ENCODE measurements at regions of chr2 and their contacts with region 1.

Region 1: DNA sequence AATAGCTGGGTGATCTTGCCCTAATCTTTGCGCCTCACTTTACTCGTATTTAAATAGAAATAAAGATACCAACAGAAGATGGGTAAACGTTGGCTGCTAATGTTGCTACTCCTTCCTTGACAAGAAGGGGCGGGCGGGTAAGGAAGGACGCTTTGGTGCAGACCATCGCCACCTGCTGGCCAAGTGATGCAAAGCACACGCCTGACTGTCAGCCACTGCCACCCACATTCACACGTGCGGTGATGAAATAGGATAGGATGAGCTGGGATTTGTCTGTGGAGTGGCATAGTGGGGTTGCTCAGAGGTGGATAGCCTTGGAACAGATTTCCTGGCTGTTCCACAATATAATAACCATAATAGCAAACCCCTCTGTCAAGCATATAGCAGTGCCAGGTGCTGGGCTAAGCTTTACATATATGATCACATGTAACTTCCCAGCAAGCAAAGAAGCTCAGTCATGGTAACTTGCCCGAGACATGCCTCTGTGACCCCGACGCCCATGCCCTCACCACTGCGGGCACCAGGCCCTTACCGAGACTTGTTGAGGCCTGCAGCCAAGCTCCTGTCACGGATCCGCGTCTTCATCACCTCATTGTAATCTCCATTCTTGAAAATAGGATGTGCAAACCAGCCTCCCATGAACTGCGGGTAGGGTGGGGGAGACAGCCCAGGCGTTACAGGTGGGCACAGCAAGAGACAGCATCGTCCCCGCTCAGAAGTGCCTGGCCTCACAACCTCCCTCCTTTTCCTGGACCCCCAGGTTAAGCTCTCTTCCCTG is 39.3 kb downstream of the LCT start:
- DNase-seq: peak; percentile 41 to 90
- H3K4me3 ChIP-seq: no peak overlapping the region
- H3K27ac ChIP-seq: peak overlapping the region; percentile 42; the same call in 1 of the 2 replicates
- H3K4me1 ChIP-seq: no peaks in the 10 kb centered on the region; a peak in 1 of 7 replicates
- H3K27me3 ChIP-seq: no peaks in the 10 kb centered on the region
- CTCF ChIP-seq: peak; percentile 97 to 100 (median 99)
- EP300 ChIP-seq: no peak
- POLR2A ChIP-seq: no peak
- RAD21 ChIP-seq: peak; percentile 59 to 74

Region 2: DNA sequence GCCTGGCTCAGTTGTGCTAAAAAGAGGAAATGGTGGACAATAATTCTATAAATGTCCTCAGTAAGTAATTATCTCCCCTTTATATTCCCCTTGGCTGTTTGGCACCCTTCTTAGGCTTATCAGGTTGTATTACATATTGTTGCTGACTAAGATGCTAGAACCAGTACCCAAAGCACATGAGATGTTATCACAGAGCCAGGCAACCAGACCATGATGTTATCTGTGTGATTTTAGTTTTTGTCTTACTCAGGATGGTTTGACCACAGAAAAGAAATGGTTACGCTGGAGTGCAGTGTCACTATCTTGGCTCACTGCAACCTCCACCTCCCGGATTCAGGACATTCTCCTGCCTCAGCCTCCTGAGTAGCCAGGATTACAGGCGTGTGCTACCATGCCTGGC is 251.2 kb before region 1 on chr2:
- CTCF ChIA-PET with region 1: no interaction called
- POLR2A ChIA-PET with region 1: no interaction called
- DNase-seq: no peak
- H3K4me3 ChIP-seq: no peak overlapping the region
- H3K27ac ChIP-seq: no peak overlapping the region
- H3K4me1 ChIP-seq: peaks cover 0 to 2% (median 0%) of the 10 kb centered on the region in 4 experiments; a peak in 1 of 7 replicates
- H3K27me3 ChIP-seq: no peaks in the 10 kb centered on the region
- CTCF ChIP-seq: no peak
- EP300 ChIP-seq: no peak
- POLR2A ChIP-seq: no peak
- RAD21 ChIP-seq: no peak

Region 3: GRCh38 chr2:135741395-135742324 is 56.0 kb before region 1 on chr2 and contains the start of gene UBXN4:
- CTCF ChIA-PET with region 1: interaction called, 17 read pairs
- POLR2A ChIA-PET with region 1: no interaction called
- DNase-seq: peak; percentile 91 to 98
- H3K4me3 ChIP-seq: peak within 1 kb of the TSS; percentile 81 to 98 (median 94)
- H3K27ac ChIP-seq: peak within 1 kb of the TSS; percentile 86
- H3K4me1 ChIP-seq: peaks cover 0 to 6% (median 3%) of the 10 kb centered on the region in 4 experiments; a peak in 2 of 7 replicates
- H3K27me3 ChIP-seq: no peaks in the 10 kb centered on the region
- CTCF ChIP-seq: peak; percentile 37 to 92 (median 55)
- EP300 ChIP-seq: no peak
- POLR2A ChIP-seq: peak; percentile 60 to 94
- RAD21 ChIP-seq: peak in 1 of 2 experiments; percentile 22; a peak in 1 of 4 replicates
- total RNA-seq, gene UBXN4: 64.2 and 66.0 TPM in 2 replicates

Region 4: DNA sequence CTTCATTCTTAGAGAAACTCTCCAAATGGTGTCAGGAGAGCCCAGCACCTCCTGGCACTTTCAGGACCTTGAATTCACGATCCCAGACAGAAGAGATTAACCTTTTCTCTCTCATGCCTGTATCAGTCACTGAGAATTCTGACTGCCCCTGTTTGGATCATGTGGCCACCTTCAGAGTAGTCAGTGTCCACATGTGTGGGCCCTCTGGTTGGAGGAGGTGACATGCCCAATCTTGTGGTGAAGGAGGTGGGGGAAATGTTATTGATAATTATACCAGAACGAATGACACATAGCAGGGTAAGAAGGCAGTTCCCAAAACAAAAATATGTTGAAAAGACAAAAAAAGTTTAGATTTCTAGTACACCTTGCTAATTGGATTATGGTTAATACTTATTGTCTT is 24.4 kb before region 1 on chr2:
- CTCF ChIA-PET with region 1: interaction called, 40 read pairs
- POLR2A ChIA-PET with region 1: interaction called, 3 read pairs
- DNase-seq: no peak
- H3K4me3 ChIP-seq: no peak overlapping the region
- H3K27ac ChIP-seq: no peak overlapping the region
- H3K4me1 ChIP-seq: no peaks in the 10 kb centered on the region
- H3K27me3 ChIP-seq: no peaks in the 10 kb centered on the region
- CTCF ChIP-seq: no peak
- EP300 ChIP-seq: no peak
- POLR2A ChIP-seq: no peak
- RAD21 ChIP-seq: no peak

Region 5: GRCh38 chr2:135785032-135785431 is 12.7 kb before region 1 on chr2:
- CTCF ChIA-PET with region 1: interaction called, 87 read pairs
- POLR2A ChIA-PET with region 1: no interaction called
- DNase-seq: no peak
- H3K4me3 ChIP-seq: no peak overlapping the region
- H3K27ac ChIP-seq: no peak overlapping the region
- H3K4me1 ChIP-seq: no peaks in the 10 kb centered on the region
- H3K27me3 ChIP-seq: no peaks in the 10 kb centered on the region
- CTCF ChIP-seq: no peak
- EP300 ChIP-seq: no peak
- POLR2A ChIP-seq: no peak
- RAD21 ChIP-seq: no peak

Region 6: DNA sequence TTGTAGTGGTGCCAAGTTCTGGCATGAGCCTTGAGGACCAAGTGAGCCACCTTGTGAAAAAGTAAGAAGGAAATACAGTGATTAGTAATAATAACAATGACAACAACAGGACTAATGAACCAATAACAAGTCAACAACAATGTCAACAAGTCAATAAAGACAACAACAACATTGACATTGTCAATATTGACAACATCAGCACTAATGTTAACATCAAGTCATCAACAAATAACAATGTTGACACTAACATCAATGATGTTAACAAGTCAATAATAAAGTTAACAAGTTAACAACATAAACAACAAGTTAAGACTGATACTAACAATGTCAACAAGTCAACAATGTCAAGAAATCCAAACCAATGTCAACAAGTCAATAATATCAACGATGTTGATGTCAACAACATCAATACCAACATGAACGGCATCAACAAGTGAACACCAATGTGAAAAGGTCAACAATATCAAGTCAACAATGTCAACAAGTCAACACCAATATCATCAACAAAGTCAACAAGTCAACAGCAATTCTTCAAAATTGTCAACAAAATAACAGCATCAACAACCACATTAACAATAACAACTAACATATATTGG is 15.3 kb after region 1 on chr2:
- CTCF ChIA-PET with region 1: interaction called, 53 read pairs
- POLR2A ChIA-PET with region 1: interaction called, 3 read pairs
- DNase-seq: no peak
- H3K4me3 ChIP-seq: no peak overlapping the region
- H3K27ac ChIP-seq: no peak overlapping the region
- H3K4me1 ChIP-seq: no peaks in the 10 kb centered on the region; a peak in 1 of 7 replicates
- H3K27me3 ChIP-seq: no peaks in the 10 kb centered on the region
- CTCF ChIP-seq: no peak
- EP300 ChIP-seq: no peak
- POLR2A ChIP-seq: no peak
- RAD21 ChIP-seq: no peak

Region 7: DNA sequence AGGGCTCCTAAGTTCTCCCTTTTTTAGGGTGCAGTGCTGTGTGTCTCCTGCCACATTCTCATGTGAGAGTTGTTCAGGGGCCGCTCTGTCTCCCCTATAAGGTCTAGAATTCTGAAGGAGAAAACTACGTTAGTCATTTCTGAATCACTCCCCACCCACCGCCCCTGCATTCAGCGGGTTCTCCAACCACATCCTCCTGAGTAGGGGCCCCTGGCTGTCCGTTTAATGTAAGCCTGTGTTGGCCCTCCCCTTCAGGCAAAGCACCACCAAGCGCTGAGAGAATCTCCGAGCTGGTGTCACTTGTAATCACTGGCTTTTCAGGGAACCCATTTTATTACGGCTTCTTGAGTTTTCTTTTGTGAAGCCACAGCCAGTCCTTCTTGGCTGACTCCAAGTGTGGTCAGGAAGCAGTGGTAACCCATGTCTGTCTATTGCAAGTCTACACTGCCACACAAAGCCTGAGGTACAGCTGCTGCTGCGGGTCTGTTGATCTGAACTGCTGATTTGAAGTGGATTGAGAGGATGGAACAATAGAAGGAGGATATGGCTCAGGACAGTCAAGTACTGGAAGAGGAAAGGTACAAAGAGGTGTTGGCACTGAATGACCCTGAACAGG is 22.4 kb after region 1 on chr2:
- CTCF ChIA-PET with region 1: interaction called, 24 read pairs
- POLR2A ChIA-PET with region 1: no interaction called
- DNase-seq: no peak
- H3K4me3 ChIP-seq: no peak overlapping the region
- H3K27ac ChIP-seq: no peak overlapping the region
- H3K4me1 ChIP-seq: no peaks in the 10 kb centered on the region; a peak in 1 of 7 replicates
- H3K27me3 ChIP-seq: no peaks in the 10 kb centered on the region
- CTCF ChIP-seq: no peak
- EP300 ChIP-seq: no peak
- POLR2A ChIP-seq: no peak
- RAD21 ChIP-seq: no peak

Region 8: DNA sequence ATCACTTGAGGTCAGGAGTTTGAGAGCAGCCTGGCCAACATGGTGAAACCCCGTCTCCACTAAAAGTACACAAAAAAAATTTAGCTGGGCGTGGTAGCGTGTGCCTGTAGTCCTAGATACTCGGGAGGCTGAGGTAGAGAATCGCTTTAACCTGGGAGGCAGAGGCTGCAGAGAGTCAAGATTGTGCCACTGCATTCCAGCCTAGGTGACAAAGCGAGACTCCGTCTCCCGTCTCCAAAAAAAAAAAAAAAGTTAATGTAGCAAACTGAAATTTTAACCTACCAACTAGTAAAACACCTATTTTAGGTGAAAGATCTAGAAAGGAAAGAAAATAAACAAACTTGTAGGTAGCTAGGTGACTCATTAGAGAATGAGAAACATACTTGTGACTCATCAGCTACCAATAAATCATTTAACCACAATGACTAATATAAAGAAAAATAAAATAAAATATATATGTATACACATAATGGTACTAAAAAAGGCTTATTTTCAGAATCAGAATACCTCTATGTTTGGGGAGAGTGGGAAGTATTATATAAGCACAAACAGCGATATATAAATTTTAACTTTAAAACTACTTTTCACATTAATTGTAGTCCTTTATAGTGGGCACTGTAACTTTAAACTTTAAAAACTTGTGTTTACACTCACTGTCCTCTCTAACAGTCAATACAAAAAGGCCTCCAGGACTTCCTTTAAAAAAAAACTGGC is 151.1 kb after region 1 on chr2:
- CTCF ChIA-PET with region 1: no interaction called
- POLR2A ChIA-PET with region 1: no interaction called
- DNase-seq: no peak
- H3K4me3 ChIP-seq: no peak overlapping the region
- H3K27ac ChIP-seq: no peak overlapping the region
- H3K4me1 ChIP-seq: peaks cover 0 to 2% (median 0%) of the 10 kb centered on the region in 4 experiments; a peak in 1 of 7 replicates
- H3K27me3 ChIP-seq: no peaks in the 10 kb centered on the region
- CTCF ChIP-seq: no peak
- EP300 ChIP-seq: no peak
- POLR2A ChIP-seq: no peak
- RAD21 ChIP-seq: no peak

Measured in H1 (cell line).